Head of caudate nucleus (tissue), 42 donors: ENCODE measurements at regions of chr20 and their contacts with region 1.

Region 1: DNA sequence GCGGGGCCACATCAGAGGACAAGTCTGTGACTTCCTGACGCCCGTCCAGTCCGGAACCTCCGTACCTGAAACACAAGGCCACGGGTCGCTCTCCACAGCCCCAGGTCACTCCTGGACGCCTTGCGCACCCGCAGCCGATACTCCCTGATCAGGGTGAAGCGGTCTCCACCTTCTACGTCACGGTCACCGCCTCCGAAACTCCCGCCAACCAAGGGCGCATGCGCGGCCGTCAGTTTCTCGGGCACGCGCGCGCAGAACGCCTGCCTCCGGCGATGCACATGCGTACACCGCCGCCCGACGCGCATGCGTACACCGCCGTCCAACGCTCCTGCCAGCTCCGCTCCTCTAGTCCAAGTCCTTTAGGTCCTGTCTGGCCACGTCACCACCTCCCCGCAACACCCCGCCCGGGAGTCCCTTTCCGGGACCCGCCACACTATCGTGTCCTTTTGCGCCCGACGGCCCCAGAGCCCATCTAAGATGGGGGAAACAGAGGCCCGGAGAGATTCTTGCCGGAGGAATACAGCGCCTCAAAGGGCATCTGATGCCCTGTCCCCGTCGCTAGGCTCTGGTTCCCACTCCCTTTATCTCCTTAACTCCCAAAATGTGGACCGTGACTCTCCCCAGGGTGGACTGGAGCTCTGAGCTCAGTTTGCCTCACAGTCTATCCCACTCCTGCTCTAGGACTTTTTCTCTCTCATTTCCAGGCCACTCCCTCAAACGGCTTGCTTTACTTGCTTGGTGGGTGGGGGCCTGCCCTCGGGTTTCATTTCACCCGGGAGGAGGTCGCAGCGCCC is at the start of gene DSN1:
- DNase-seq: peak; percentile 74 to 98 (median 93)

Region 2: GRCh38 chr20:36666181-36666740 is 107.5 kb before region 1 on chr20:
- intact Hi-C with region 1: no loop called
- DNase-seq: no peak

Region 3: DNA sequence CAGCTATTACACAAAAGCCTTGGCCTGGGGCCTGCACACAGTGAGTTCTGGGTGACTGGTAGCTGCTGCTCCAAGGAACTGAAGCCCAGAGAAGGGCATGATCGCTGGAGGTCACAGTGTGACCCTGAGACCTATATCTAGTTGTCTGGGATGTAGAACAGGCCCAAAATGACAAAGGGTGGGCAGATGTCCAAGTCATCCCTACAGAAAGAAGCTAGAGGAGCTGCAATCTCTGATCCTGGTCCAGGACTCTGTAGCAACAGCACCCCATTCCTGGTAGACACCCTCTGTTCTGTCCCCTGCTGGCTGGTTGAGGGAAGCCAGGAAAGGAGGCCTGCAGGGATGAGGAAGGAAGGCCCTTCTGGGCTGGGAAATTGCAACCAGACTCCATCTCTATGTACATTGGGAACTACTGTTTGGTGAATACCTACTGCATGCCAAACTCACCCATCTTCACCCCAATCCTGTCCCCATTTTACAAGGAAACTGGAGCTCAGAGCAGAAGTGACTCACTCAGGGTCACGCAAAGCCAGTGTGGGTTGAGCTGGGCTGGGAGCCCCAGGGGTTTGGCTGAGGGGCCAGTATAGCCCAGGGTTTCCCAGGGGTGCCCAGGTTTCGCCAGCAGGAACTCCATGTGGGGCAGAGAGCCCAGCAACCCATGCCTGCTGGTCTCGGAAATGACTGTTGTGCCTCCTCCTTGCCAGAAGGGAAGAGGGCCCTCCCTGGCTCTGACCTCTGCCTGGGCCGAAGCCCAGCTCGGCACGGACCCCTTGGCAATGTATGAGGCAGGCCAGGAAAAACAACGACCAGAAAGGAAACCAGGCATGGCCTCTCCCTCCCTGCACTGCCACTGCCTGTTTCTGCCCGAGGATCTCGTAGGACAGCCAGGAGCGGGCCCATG is 57.2 kb after region 1 on chr20:
- intact Hi-C with region 1: no loop called
- DNase-seq: peak in 41 of 42 donors; percentile 25 to 90 (median 68)

Region 4: DNA sequence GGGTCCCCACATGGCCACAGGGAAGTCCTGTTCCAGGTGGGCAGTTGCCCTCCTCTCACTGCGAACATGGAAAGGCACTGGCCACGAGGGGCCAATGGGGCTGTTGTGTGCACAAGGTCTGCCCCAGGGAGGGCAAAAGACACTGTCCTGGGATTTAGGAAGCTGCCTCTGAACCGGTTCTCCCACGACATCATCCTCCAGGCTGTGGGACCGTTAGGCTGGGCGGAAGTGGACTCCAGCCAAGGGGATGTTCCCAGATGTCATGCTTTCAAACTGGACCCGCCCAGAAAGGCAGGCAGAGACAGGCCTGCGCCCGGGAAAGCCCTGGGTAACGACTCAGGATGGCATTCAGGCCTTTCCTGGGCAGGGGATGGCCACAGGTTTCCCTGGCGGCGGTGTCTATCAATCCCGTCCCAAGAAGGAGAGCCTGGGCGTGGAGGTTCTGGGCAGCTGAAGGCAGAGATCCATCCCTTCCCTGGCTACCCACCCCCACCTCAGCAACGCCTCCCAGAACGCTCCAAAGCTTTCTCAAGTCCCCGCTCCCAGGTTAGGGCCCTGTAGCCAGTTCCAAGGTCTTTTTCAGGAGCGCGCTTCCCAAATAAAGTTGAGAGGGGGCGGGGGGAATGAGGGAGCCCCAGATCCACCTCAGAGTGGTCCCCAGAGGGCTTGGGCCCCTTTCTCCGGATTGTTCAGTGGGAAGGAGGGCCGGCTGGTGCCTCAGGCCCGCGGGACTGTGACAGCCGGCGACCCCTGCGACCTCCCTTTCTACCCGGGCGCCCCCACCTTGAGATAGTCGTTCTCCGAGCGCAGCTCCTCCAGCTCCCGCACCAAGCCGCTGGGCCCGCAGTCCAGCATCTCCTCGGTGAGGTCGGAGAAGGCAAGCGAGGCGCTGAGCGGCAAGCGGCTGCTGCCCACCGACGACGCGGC is 88.3 kb after region 1 on chr20:
- intact Hi-C with region 1: loop called (anchors 10 kb)
- DNase-seq: peak; percentile 71 to 95 (median 87)